Gastrocnemius medialis (tissue), 4 donors: ENCODE measurements at regions of chr4 and their contacts with region 1.

Region 1: DNA sequence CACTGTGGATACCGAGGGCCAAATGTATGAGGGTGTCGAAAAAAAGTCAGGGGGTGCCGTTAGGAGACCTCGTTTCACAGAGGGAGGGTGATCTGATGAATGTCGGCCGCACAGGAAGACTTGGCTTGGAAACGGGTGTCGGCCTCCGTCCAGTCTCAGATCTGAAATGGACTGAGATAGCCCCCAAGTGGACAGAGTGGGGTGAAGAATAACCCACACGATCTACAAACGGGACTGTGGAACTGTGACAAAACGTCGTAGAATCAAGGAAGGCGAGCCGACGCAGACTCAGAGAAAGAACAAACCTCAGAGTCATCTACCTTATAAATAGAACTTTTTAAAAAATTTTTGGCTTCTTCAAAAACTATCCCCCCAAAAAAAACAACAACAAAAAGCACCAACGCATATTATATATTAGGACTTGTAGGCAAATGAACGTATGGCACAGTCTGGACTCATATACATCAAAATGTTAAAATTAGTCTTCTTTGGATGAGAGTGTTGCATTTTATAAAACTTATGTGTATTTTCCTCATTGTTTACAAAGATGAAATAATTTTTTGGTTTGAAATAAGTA is 63.8 kb upstream of the IRF2 start:
- DNase-seq: peak; percentile 82 to 90
- ATAC-seq: peak; percentile 94 to 95
- H3K4me3 ChIP-seq: peak overlapping the region; percentile 67 to 89 (median 81)
- H3K27ac ChIP-seq: peak overlapping the region; percentile 90 to 97 (median 92)
- H3K4me1 ChIP-seq: peaks cover 0 to 13% of the 10 kb centered on the region in 2 donors
- H3K27me3 ChIP-seq: no peaks in the 10 kb centered on the region
- CTCF ChIP-seq: peak; percentile 66 to 78 (median 75)
- POLR2A ChIP-seq: no peak

Region 2: DNA sequence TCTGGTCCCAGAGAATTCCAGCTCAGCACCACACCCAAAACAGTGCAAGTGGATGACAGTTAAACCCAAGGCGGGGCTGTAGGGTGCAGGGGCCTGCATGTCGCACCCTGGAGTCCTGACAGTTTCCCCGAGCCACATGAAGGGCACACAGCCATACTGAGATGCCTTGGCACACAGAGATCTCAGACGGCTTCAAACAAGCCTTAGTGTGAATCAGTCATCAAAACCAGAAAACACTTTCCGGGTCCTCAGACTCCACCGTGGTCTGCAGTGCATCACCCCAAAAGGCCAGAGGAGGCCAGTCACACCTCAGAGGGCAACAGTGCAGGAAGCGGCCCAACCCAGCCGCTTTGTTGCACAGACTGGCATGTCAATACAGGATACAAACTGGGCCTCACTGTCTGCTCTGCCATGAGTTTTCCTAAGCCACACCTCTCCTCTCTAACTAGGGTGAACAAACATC is 255.8 kb before region 1 on chr4:
- in situ Hi-C with region 1: loop called in 2 of 4 experiments (anchors 5 to 10 kb)
- intact Hi-C with region 1: loop called (anchors 1 kb)
- DNase-seq: no peak
- ATAC-seq: peak in 1 of 2 donors; percentile 56
- H3K4me3 ChIP-seq: no peak overlapping the region
- H3K27ac ChIP-seq: no peak overlapping the region
- H3K4me1 ChIP-seq: peaks cover 3% of the 10 kb centered on the region in 2 donors
- H3K27me3 ChIP-seq: no peaks in the 10 kb centered on the region
- CTCF ChIP-seq: peak in 1 of 5 experiments; percentile 29
- POLR2A ChIP-seq: no peak

Region 3: GRCh38 chr4:184329659-184330400 is 208.3 kb before region 1 on chr4:
- in situ Hi-C with region 1: no loop called
- intact Hi-C with region 1: loop called (anchors 1 kb)
- DNase-seq: peak in 1 of 2 donors; percentile 47
- ATAC-seq: no peak
- H3K4me3 ChIP-seq: no peak overlapping the region
- H3K27ac ChIP-seq: peak overlapping the region in 1 of 4 donors; percentile 66
- H3K4me1 ChIP-seq: peaks cover 15% of the 10 kb centered on the region in 2 donors
- H3K27me3 ChIP-seq: no peaks in the 10 kb centered on the region
- CTCF ChIP-seq: no peak
- POLR2A ChIP-seq: no peak

Region 4: GRCh38 chr4:184384056-184384809 is 153.9 kb before region 1 on chr4:
- in situ Hi-C with region 1: no loop called
- intact Hi-C with region 1: loop called (anchors 5 kb)
- DNase-seq: peak in 1 of 2 donors; percentile 41
- ATAC-seq: peak; percentile 17 to 42
- H3K4me3 ChIP-seq: peak overlapping the region; percentile 16 to 47 (median 26)
- H3K27ac ChIP-seq: peak overlapping the region; percentile 78 to 89 (median 83)
- H3K4me1 ChIP-seq: peaks cover 57 to 58% of the 10 kb centered on the region in 2 donors
- H3K27me3 ChIP-seq: no peaks in the 10 kb centered on the region
- CTCF ChIP-seq: no peak
- POLR2A ChIP-seq: peak in 1 of 2 donors; percentile 27

Region 5: GRCh38 chr4:184474263-184475095 is 63.6 kb before region 1 on chr4 and contains the start of gene IRF2:
- in situ Hi-C with region 1: loop called in 1 of 4 experiments (anchors 10 kb)
- intact Hi-C with region 1: loop called (anchors 1 kb)
- DNase-seq: peak; percentile 97
- ATAC-seq: peak; percentile 77
- H3K4me3 ChIP-seq: peak within 1 kb of the TSS; percentile 83 to 98 (median 92)
- H3K27ac ChIP-seq: peak within 1 kb of the TSS; percentile 96 to 100 (median 98)
- H3K4me1 ChIP-seq: peaks cover 51 to 54% of the 10 kb centered on the region in 2 donors
- H3K27me3 ChIP-seq: no peaks in the 10 kb centered on the region
- CTCF ChIP-seq: peak in 3 of 5 experiments; percentile 7 to 44 (median 36)
- POLR2A ChIP-seq: peak; percentile 96 to 97
- total RNA-seq, gene IRF2: 20.9 to 37.1 (median 32.8) TPM

Region 6: GRCh38 chr4:184649026-184649970 is 111.2 kb after region 1 on chr4 and contains the starts of genes CASP3 and PRIMPOL:
- in situ Hi-C with region 1: no loop called
- intact Hi-C with region 1: loop called (anchors 2 kb)
- DNase-seq: peak; percentile 93 to 95
- ATAC-seq: peak; percentile 80 to 86
- H3K4me3 ChIP-seq: peak within 1 kb of the TSS; percentile 66 to 98 (median 82)
- H3K27ac ChIP-seq: peak within 1 kb of the TSS; percentile 89 to 100 (median 98)
- H3K4me1 ChIP-seq: peaks cover 46 to 54% of the 10 kb centered on the region in 2 donors
- H3K27me3 ChIP-seq: no peaks in the 10 kb centered on the region
- CTCF ChIP-seq: peak in 2 of 5 experiments; percentile 29 to 45
- POLR2A ChIP-seq: peak; percentile 86 to 92
- total RNA-seq, gene CASP3: 16.9 to 25.5 (median 20.8) TPM
- total RNA-seq, gene PRIMPOL: 5.9 to 11.1 (median 10.7) TPM